ENCODE measurements at regions of chr7 and their contacts with region 1.

Region 1: GRCh38 chr7:123635551-123636359 is 19.9 kb upstream of the LMOD2 start:
- DNase-seq: peak; percentile 54
- H3K4me3 ChIP-seq: no peak overlapping the region
- H3K27ac ChIP-seq: no peak overlapping the region
- H3K4me1 ChIP-seq: no peaks in the 10 kb centered on the region
- H3K27me3 ChIP-seq: no peaks in the 10 kb centered on the region
- CTCF ChIP-seq: peak; percentile 76

Region 2: DNA sequence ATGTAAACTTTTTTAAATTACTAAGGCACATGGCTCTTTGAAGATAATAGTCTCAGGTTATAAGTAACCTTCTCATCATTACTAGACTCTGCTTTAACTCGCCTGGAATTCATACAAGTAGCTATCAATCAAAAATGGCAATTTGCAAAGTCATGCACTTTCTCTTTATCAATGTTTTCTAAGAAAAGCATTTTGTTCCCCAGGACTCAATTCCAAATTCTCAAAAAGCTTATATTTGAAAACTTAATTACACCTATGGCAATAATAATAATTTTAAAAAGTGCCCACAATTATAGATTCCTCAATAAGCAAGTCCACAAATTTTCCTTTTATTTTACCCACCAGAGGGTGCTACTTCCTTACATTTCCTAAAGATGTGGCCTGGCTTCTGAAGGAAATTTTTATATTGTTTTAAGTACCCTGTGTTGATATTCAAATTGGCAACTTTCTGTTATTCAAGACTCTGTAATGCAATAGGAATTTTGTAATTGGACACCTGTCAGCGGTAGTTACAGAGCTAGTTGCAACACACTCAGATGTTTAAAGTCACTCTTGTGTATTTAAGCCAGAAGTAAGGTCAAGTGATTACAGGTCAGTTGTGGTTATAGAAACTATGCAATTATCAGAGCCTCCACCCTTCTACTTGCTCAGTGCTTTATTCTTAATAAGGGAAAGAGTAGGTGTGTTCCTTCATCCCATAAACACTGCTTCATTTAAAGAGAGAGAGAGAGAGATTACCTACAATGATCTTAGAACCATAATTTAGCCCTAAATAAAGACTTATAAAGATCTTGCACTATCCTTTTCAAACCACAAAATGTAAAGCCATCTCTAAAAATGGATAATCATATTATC is 162.1 kb after region 1 on chr7:
- CTCF ChIA-PET with region 1: no interaction called
- POLR2A ChIA-PET with region 1: no interaction called
- intact Hi-C with region 1: loop called (anchors 5 kb)
- DNase-seq: peak; percentile 70
- H3K4me3 ChIP-seq: no peak overlapping the region
- H3K27ac ChIP-seq: no peak overlapping the region
- H3K4me1 ChIP-seq: no peaks in the 10 kb centered on the region
- H3K27me3 ChIP-seq: no peaks in the 10 kb centered on the region
- CTCF ChIP-seq: peak; percentile 72

Region 3: GRCh38 chr7:124085179-124085578 is 449.4 kb after region 1 on chr7:
- CTCF ChIA-PET with region 1: no interaction called
- POLR2A ChIA-PET with region 1: no interaction called
- intact Hi-C with region 1: no loop called
- DNase-seq: peak; percentile 92
- H3K4me3 ChIP-seq: no peak overlapping the region
- H3K27ac ChIP-seq: peak overlapping the region; percentile 83
- H3K4me1 ChIP-seq: peaks cover 59% of the 10 kb centered on the region
- H3K27me3 ChIP-seq: no peaks in the 10 kb centered on the region
- CTCF ChIP-seq: no peak

Region 4: DNA sequence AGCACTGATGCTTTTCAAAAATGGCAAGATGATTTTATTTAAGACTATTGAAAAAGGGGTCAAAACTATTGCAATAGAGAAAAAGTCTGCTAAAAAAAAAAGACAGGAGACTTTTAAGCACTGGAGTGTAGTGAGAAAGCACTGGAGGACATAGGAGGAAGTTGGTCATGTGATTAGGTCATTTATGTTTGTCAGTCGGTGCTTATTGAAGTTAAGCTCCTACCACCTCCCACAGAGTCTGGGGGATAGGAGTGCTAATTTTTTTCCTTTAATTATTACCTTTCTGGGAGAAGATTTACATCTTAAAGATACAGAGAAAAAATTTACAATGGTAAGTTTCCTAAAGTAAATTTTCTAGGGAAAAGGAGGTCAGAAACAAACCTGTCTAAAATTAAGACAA is 477.3 kb after region 1 on chr7:
- CTCF ChIA-PET with region 1: no interaction called
- POLR2A ChIA-PET with region 1: no interaction called
- intact Hi-C with region 1: no loop called
- DNase-seq: peak; percentile 14
- H3K4me3 ChIP-seq: no peak overlapping the region
- H3K27ac ChIP-seq: no peak overlapping the region
- H3K4me1 ChIP-seq: peaks cover 7% of the 10 kb centered on the region
- H3K27me3 ChIP-seq: no peaks in the 10 kb centered on the region
- CTCF ChIP-seq: no peak